PC-3 (cell line): ENCODE measurements at regions of chr3 and their contacts with region 1.

Region 1: GRCh38 chr3:96813134-96813819 is 1.1 kb upstream of the EPHA6 start:
- DNase-seq: peak; percentile 87
- ATAC-seq: peak; percentile 74
- H3K4me3 ChIP-seq: peak overlapping the region; percentile 81
- H3K27ac ChIP-seq: no peak overlapping the region
- H3K4me1 ChIP-seq: peaks cover 8% of the 10 kb centered on the region
- H3K27me3 ChIP-seq: peaks cover 13% of the 10 kb centered on the region
- CTCF ChIP-seq: peak; percentile 87

Region 2: GRCh38 chr3:95474338-95474737 is 1338.9 kb before region 1 on chr3:
- CTCF ChIA-PET with region 1: interaction called, 13 read pairs
- POLR2A ChIA-PET with region 1: no interaction called
- intact Hi-C with region 1: no loop called
- DNase-seq: no peak
- ATAC-seq: no peak
- H3K4me3 ChIP-seq: no peak overlapping the region
- H3K27ac ChIP-seq: no peak overlapping the region
- H3K4me1 ChIP-seq: no peaks in the 10 kb centered on the region
- H3K27me3 ChIP-seq: no peaks in the 10 kb centered on the region
- CTCF ChIP-seq: no peak

Region 3: DNA sequence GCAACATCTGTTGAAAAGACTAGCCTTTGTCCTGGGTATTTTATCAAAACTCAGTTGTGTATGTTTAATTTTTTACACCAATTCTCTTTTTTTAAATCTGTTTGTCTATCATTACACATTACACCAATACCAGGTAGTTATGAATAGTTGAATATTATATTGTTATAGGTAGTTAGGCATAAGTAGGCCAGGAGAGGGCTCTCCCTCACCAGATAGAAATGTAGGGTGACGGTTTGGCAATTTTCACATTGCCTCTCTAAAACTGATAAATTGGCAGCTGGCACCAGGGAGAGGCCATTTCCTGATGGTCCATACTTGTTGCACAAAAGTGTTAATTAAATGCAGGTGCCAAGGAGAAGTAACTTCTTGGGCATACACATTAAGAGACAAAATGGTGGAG is 481.9 kb before region 1 on chr3:
- CTCF ChIA-PET with region 1: no interaction called
- POLR2A ChIA-PET with region 1: no interaction called
- intact Hi-C with region 1: loop called (anchors 1 kb)
- DNase-seq: peak; percentile 59
- ATAC-seq: peak; percentile 75
- H3K4me3 ChIP-seq: no peak overlapping the region
- H3K27ac ChIP-seq: no peak overlapping the region
- H3K4me1 ChIP-seq: peaks cover 6% of the 10 kb centered on the region; the same call in 1 of the 2 replicates
- H3K27me3 ChIP-seq: no peaks in the 10 kb centered on the region
- CTCF ChIP-seq: peak; percentile 75

Region 4: GRCh38 chr3:96631050-96631449 is 182.2 kb before region 1 on chr3:
- CTCF ChIA-PET with region 1: no interaction called
- POLR2A ChIA-PET with region 1: no interaction called
- intact Hi-C with region 1: loop called (anchors 10 kb)
- DNase-seq: peak; percentile 56
- ATAC-seq: peak; percentile 86
- H3K4me3 ChIP-seq: no peak overlapping the region
- H3K27ac ChIP-seq: no peak overlapping the region
- H3K4me1 ChIP-seq: peaks cover 14% of the 10 kb centered on the region
- H3K27me3 ChIP-seq: no peaks in the 10 kb centered on the region
- CTCF ChIP-seq: no peak

Region 5: DNA sequence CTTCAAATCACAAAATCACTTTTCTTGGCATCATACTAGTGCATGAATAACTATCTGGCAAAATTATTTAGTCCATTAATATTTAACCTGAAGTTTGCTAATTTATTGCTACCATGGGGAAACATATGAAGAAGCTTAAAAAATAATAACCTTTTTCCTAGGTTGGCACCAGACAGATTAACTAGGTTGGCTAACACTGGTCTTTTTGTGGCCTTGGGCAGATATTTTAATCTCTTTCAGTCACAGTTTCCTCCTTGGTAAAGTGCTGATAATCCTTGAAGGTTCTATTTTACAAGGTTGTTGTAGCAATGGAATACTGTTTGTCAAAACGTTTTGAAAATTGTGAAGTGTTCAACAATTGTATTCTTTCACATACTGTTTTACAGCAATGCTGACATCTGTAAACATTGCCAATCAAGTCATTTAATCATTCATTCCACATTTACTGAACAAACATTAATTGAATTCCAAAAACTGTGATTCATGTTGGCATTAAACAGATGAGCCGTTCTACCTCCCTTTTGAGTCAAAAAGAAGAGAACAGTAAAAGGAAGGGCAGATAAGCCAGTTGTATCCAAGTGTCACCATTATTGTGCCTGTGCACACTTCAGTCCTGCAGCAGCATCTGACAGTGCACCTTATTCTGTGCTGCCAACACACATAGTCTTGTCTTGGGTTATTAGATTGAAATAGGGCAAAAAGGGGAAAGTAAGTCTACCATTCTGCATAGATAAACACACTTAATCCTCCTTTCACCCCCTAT is 23.1 kb after region 1 on chr3:
- CTCF ChIA-PET with region 1: no interaction called
- POLR2A ChIA-PET with region 1: no interaction called
- intact Hi-C with region 1: loop called (anchors 1 kb)
- DNase-seq: peak; percentile 61
- ATAC-seq: peak; percentile 93
- H3K4me3 ChIP-seq: no peak overlapping the region
- H3K27ac ChIP-seq: 0 out of 2 replicates have a peak overlapping the region, but pooled peaks have one; percentile 11
- H3K4me1 ChIP-seq: peaks cover 15% of the 10 kb centered on the region; the same call in 1 of the 2 replicates
- H3K27me3 ChIP-seq: no peaks in the 10 kb centered on the region
- CTCF ChIP-seq: no peak

Region 6: DNA sequence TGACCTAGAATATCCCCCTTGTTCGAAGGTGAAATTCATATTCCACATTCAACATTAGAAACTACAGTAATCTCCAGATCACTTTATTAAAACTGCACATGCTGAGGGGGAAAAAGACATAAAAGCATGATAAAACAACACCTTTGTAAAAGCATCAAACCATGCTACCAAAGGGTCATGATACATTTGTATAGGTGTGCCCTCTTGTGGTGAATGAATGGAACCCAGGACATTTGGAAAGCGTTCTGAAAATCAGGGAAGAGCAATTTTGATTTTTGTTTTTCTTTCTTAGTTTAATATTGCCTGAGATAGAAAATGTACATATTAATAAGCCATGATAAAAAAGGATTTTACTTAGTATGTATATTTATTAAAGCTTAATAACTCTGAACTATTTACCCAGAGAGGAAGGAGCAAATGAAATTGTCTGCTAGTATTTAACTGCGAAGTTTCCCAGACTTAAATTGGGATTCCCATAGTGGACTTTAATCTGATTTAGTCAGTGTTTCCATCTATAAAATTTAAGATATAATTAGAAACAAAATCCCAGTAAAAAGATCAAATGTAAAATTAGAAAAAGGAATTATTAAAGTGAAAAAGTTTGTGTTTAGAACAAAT is 845.5 kb after region 1 on chr3:
- CTCF ChIA-PET with region 1: no interaction called
- POLR2A ChIA-PET with region 1: no interaction called
- intact Hi-C with region 1: loop called (anchors 2 kb)
- DNase-seq: peak; percentile 61
- ATAC-seq: peak; percentile 73
- H3K4me3 ChIP-seq: no peak overlapping the region
- H3K27ac ChIP-seq: no peak overlapping the region
- H3K4me1 ChIP-seq: no peaks in the 10 kb centered on the region
- H3K27me3 ChIP-seq: no peaks in the 10 kb centered on the region
- CTCF ChIP-seq: peak; percentile 91